ENCODE measurements at regions of chr12 and their contacts with region 1.

Region 1: GRCh38 chr12:69738351-69739286 is at the start of gene RAB3IP:
- DNase-seq: peak; percentile 97
- H3K4me3 Mint-ChIP-seq: peak within 1 kb of the TSS; percentile 86
- H3K27ac Mint-ChIP-seq: peak within 1 kb of the TSS; percentile 76
- H3K4me1 Mint-ChIP-seq: peaks cover 15% of the 10 kb centered on the region
- H3K27me3 Mint-ChIP-seq: peaks cover 33% of the 10 kb centered on the region
- total RNA-seq, gene RAB3IP: 28.5 and 33.6 TPM in 2 replicates

Region 2: DNA sequence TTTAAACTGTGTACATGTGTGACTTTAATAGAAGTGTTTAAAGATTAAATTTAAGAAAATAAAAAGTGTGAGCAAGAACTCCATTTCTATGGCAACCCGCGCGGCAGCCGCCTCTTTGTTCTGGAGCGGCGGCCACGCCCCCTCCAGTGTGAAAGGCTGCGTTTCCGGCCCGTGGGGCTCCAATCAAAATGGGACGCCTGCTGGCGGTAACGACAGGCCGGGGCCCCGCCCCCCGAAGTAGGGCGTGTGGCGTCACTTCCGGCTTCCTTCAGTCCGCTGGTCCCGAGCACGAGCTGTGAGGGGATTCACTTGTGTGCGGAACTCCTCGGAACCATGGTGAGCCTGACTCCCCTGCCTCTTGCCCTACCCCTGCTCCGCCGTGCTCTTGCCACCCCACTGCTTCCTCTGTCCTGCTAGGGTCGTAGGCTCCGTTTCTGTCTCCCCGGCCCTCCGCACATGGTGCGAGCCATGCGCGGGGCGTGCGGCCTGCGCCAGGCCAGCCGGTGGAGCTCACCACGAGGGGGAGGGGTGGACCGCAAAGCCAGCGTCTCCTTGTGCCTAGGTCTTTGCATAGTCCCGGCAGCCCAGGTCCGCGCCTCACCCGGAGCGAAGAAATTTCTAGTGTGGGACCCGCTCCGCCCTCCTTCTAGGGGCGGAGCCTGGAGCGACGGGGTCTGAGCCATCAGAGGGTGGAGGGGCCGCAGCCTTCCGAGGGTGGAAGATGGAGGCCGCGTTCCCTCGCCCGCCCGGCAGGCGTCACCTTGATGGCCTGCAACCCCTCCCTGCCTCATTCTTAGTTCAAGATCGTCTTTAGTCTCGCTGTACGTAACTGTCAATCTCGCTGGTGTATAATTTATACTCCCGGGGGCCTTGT is 153.2 kb before region 1 on chr12 and contains the start of gene CCT2:
- intact Hi-C with region 1: loop called (anchors 2 kb)
- DNase-seq: peak; percentile 99
- H3K4me3 Mint-ChIP-seq: peak within 1 kb of the TSS; percentile 99
- H3K27ac Mint-ChIP-seq: peak within 1 kb of the TSS; percentile 99
- H3K4me1 Mint-ChIP-seq: peaks cover 14% of the 10 kb centered on the region
- H3K27me3 Mint-ChIP-seq: no peaks in the 10 kb centered on the region
- total RNA-seq, gene CCT2: 490 and 511 TPM in 2 replicates

Measured in activated CD4-positive, alpha-beta T cell treated with anti-CD3 and anti-CD28 coated beads, Interleukin-2, amount 10 ng/mL, durations not matched to agents 24 days and 14 days (primary cell).